Head of caudate nucleus (tissue), 42 donors: ENCODE measurements at regions of chr22 and their contacts with region 1.

Region 1: GRCh38 chr22:27223317-27224177 is 566.2 kb downstream of the MIAT start:
- DNase-seq: peak in 2 of 42 donors; percentile 46 to 54

Region 2: GRCh38 chr22:26797910-26798309 is 425.6 kb before region 1 on chr22:
- intact Hi-C with region 1: no loop called
- DNase-seq: no peak

Region 3: GRCh38 chr22:27318516-27318915 is 95.0 kb after region 1 on chr22:
- intact Hi-C with region 1: loop called (anchors 10 kb)
- DNase-seq: peak in 12 of 42 donors; percentile 27 to 70 (median 43)